ENCODE measurements at regions of chr3 and their contacts with region 1.

Region 1: DNA sequence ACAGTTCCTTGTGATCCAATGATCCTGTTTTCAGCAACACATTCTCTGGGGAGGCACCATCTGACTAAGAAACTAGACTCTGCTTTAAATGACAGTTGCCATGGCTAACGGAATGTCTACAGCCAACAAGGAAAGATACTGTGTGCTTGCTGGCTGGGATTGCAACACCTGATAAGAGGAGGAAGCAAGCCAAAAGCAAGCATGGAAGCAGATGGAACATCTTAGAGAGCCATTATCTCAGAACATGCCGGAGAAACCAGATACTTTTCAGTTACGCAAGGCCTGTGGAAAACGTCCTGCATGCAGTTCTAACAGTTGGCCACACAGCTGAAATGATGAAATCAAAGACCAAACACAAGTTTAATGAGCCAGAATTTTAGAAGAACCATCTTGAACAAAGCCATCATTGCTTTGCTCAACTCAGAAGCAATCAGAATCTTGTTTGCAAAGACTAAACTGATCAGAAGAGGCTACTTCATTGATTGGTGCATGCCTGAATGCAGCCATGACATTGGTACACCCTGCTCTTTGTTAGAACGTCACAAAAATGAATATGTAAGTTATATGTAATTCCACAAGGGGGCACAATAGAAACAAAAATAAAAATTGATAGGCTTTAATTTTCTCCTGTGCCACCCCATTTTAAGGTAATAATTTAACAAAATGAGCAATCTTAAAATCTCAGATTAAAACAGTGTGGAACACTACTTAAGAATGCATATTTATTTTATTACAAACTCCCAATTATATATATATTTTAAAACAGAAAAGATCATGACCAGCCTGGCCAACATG is 50.8 kb downstream of the GXYLT2 start:
- DNase-seq: peak in 1 of 2 donors; percentile 54
- ATAC-seq: peak; percentile 92
- H3K4me3 ChIP-seq: no peak overlapping the region
- H3K27ac ChIP-seq: peak overlapping the region in 1 of 2 donors; percentile 9
- H3K4me1 ChIP-seq: peaks cover 1 to 3% of the 10 kb centered on the region in 2 donors
- H3K27me3 ChIP-seq: no peaks in the 10 kb centered on the region

Region 2: DNA sequence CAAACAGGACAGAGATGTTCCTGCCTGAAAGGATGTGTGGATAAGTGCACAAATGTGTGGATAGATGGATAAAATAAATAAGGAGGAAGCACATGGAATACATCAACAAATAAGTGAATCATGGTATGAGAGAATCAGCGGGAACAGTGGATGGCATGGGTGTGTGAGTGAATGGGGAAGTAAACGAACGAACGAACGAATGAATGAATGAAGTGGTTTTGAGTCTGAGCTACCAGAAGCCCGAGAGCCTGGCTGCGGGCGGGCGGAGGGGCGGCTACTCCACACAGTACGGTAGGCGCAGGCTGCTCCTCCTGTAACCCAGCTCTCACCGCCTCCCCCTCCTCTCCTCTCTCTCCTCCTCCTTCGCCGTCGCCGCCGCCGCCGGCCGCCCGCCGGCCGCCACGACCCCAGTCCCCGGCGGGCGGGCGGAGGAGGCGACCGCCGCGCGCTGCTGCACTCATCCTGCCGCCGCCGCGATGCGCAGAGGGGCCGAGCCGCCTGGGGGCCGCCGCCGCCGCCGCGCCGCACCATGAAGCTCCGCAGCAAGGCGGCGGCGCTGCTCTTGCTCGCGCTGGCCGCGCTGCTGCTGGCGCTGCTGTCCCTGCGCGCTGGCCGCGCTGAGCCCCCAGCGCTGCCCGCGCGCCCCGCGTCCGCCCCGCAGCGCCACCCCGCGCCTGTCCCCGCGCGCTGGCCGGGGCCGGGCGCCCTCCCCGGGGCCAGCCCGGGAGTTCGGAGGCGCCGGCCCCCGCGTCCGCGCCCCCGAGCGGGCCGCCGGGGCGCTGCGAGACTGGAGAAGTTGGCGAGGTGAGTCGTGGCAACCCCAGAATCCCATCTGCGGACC is 50.7 kb before region 1 on chr3 and contains the start of gene GXYLT2:
- intact Hi-C with region 1: loop called in 1 of 2 experiments (anchors 5 kb)
- DNase-seq: peak; percentile 81 to 87
- ATAC-seq: peak; percentile 86
- H3K4me3 ChIP-seq: peak within 1 kb of the TSS; percentile 96 to 97
- H3K27ac ChIP-seq: peak within 1 kb of the TSS; percentile 62 to 78
- H3K4me1 ChIP-seq: no peaks in the 10 kb centered on the region
- H3K27me3 ChIP-seq: no peaks in the 10 kb centered on the region
- total RNA-seq, gene GXYLT2: 20.4 to 46.4 TPM

Region 3: DNA sequence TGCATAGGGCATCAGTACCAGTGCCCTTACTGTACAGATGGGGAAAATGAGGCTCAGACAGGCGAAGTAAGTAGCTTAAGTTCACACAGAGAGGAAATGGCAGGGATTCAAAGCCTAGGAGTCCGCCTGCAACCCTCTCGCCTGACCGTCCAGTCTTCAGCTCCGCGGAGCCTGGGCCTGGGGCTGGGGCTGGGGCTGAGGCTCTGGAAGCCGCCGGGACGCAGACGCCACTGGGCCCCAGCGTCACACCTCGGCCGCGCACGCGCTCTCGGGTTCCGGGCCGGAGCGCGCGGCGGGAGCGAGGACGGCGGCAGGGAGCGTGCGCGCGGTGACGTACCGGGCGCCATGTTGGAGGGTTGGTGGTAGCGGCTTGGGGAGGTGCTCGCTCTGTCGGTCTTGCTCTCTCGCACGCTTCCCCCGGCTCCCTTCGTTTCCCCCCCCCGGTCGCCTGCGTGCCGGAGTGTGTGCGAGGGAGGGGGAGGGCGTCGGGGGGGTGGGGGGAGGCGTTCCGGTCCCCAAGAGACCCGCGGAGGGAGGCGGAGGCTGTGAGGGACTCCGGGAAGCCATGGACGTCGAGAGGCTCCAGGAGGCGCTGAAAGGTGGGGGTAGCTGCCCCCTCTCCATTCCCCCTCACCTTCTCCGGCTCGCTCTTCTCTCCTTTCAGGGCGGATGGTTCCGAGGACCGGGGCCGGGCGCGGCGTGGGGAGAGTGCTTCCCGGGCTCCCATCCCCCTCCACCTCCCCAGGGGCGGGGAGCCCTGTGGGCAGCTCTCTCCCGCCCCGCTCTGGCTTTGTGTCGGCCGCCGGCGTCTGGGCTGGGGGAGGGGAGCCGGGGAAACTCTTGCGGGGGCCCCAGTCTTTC is 58.0 kb after region 1 on chr3 and contains the start of gene PPP4R2:
- intact Hi-C with region 1: loop called in 1 of 2 experiments (anchors 5 kb)
- DNase-seq: peak; percentile 94 to 97
- ATAC-seq: peak; percentile 98
- H3K4me3 ChIP-seq: peak within 1 kb of the TSS; percentile 95 to 97
- H3K27ac ChIP-seq: peak within 1 kb of the TSS; percentile 53 to 89
- H3K4me1 ChIP-seq: peaks cover 0 to 2% of the 10 kb centered on the region in 2 donors
- H3K27me3 ChIP-seq: no peaks in the 10 kb centered on the region
- total RNA-seq, gene PPP4R2: 65.4 to 70.7 TPM

Region 4: GRCh38 chr3:73029321-73029796 is 90.7 kb after region 1 on chr3:
- intact Hi-C with region 1: no loop called
- DNase-seq: no peak
- ATAC-seq: peak; percentile 62
- H3K4me3 ChIP-seq: no peak overlapping the region
- H3K27ac ChIP-seq: no peak overlapping the region
- H3K4me1 ChIP-seq: peaks cover 4 to 8% of the 10 kb centered on the region in 2 donors
- H3K27me3 ChIP-seq: no peaks in the 10 kb centered on the region

Region 5: DNA sequence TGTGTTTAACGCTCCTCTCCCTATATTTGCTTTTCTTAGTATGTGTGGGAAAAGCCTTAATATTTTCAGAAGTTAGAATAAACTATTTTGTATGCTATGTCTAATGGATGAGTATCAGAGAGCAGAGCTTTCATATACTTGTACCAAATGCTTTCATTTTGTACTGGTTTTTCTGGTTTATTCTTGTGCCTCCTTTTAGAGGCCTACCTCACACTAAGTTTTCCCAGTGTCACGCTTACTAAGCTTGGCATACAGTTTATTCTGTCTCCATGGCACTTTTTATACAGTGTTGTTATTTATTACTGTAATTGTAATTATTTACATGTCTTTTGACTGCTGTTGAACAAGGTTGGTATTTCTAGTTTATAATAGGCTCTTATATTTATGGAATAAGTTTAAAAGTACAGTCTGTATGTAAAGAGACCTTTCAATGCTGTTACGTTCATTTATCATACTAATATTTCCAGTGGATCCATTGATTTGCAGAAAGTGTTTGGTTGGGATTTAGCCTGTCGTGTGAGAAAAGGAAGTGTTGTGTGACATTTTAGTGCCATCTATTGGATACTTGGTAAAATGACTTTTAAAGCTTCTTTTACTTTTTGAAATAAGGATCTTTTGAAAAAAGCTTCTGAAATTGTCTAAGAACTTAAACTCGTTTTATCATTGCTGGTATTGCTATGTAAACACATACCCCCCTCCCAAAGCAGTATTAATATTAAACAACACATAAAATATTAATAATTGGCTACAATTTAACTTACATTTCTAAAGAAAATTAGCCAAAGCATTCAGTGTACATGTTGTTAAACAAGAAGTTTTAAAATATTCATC is 117.6 kb after region 1 on chr3:
- intact Hi-C with region 1: loop called (anchors 5 kb)
- DNase-seq: no peak
- ATAC-seq: peak; percentile 70
- H3K4me3 ChIP-seq: no peak overlapping the region
- H3K27ac ChIP-seq: no peak overlapping the region
- H3K4me1 ChIP-seq: no peaks in the 10 kb centered on the region
- H3K27me3 ChIP-seq: no peaks in the 10 kb centered on the region

Region 6: DNA sequence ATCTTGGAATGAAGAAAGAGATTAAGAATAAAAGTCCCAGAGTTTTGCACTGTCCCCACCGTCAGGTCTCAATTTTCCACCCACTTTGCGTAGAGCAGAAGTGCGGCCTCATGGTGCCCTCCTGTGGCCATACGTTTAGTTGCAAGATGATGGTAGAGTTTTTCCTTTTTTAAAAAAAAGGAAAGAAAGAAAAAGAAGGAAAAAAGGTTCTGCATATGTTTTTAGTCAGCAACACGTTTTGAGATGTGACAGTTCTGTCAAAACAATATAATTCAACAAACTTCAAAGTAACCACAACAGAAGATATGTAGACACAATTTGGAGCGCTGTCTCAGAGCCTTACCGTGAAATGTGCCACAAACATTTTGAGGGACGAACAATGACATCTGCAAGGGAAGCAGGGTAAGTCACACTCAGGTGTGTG is 147.4 kb after region 1 on chr3:
- intact Hi-C with region 1: loop called (anchors 10 kb)
- DNase-seq: no peak
- ATAC-seq: peak; percentile 83
- H3K4me3 ChIP-seq: no peak overlapping the region
- H3K27ac ChIP-seq: no peak overlapping the region
- H3K4me1 ChIP-seq: no peaks in the 10 kb centered on the region
- H3K27me3 ChIP-seq: no peaks in the 10 kb centered on the region

Region 7: GRCh38 chr3:73448761-73449301 is 510.2 kb after region 1 on chr3:
- intact Hi-C with region 1: no loop called
- DNase-seq: no peak
- ATAC-seq: no peak
- H3K4me3 ChIP-seq: no peak overlapping the region
- H3K27ac ChIP-seq: no peak overlapping the region
- H3K4me1 ChIP-seq: peaks cover 0 to 7% of the 10 kb centered on the region in 2 donors
- H3K27me3 ChIP-seq: no peaks in the 10 kb centered on the region

Measured in aorta (tissue), 5 donors.